Activated CD4-positive, alpha-beta T cell treated with anti-CD3 and anti-CD28 coated beads for 36 hours (primary cell): ENCODE measurements at regions of chr18 and their contacts with region 1.

Region 1: GRCh38 chr18:11541202-11541601 is 68.2 kb upstream of the SLC35G4 start:
- DNase-seq: no peak
- ATAC-seq: no peak
- H3K4me3 Mint-ChIP-seq: no peak overlapping the region
- H3K27ac Mint-ChIP-seq: no peak overlapping the region
- H3K4me1 Mint-ChIP-seq: no peaks in the 10 kb centered on the region
- H3K27me3 Mint-ChIP-seq: no peaks in the 10 kb centered on the region

Region 2: GRCh38 chr18:11553098-11553940 is 12.1 kb after region 1 on chr18:
- CTCF ChIA-PET with region 1: interaction called, 18 read pairs
- POLR2A ChIA-PET with region 1: no interaction called
- intact Hi-C with region 1: no loop called
- DNase-seq: peak; percentile 51
- ATAC-seq: peak; percentile 61
- H3K4me3 Mint-ChIP-seq: no peak overlapping the region
- H3K27ac Mint-ChIP-seq: no peak overlapping the region
- H3K4me1 Mint-ChIP-seq: no peaks in the 10 kb centered on the region
- H3K27me3 Mint-ChIP-seq: peaks cover 2% of the 10 kb centered on the region

Region 3: DNA sequence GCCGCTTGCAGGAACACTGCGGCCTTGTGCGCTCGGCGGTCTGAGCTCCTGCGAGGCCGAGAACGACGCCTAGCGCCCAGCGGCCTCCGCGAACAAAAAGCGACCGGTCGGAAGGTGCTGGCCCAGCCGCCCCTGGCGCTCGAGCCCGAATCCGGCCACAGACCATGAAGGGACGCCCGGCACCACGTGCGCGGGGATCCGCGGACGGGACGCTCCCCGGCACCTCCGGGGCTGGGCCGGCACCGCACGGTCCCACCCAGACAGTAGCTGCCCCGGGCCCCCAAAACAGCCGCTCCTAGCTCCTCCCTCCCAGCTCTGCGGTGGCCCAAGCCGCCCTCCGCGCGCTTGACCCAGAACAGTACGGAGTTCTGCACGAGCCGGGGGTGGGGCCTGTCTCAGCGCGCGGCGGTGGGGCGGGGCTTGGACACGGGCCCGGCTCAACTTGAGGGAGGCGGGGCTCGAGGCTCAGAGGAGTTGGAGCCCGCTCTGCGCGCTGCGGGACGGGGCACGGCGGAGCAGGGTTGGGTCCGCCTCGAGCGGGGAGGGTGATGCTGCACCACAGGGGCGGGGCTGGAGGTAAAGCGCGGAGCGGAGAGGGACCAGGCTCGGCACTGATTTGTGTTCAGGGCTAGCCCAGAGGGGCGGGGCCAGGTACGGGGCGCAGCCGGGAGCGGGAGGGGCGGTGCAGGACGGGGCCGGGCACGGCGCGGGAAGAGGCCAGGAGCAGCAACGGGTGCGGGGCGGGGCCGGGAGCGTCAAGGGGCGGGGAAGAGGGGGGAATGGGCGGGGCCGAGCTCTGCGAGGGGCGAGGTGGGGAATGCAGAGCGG is 439.6 kb after region 1 on chr18:
- CTCF ChIA-PET with region 1: no interaction called
- POLR2A ChIA-PET with region 1: no interaction called
- intact Hi-C with region 1: no loop called
- DNase-seq: peak; percentile 99
- ATAC-seq: peak; percentile 95
- H3K4me3 Mint-ChIP-seq: peak overlapping the region; percentile 91
- H3K27ac Mint-ChIP-seq: peak overlapping the region; percentile 82
- H3K4me1 Mint-ChIP-seq: peaks cover 16% of the 10 kb centered on the region
- H3K27me3 Mint-ChIP-seq: peaks cover 4% of the 10 kb centered on the region